MCF 10A (cell line): ENCODE measurements at regions of chr17 and their contacts with region 1.

Region 1: DNA sequence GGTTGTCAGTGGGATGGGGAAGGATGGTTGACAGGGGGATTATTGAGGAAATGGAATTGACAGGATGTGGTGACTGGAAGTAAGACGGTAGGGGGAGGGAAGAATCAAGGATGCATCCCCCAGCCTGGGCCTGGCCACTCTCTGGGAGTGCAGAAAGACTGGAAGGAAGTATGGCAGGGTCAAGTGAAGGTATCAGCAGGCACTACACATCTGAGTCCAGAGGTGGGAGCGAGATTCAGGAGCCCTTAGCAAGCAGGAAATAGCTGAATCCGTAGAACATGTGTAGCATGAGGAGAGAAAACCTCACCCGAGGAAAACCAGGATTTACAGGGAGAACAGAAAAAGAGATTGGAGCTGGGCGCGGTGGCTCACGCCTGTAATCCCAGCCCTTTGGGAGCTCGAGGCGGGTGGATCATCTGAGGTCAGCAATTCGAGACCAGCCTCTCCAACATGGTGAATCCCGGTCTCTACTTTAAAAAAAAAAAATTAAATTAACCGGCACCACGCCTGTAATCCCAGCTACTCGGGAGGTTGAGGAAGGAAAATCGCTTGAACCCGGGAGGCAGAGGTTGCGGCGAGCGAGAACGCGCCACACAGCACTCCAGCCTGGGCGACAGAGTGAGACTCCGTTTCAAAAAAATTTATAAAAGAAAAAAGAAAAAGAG is 5.8 kb downstream of the BORCS6 start:
- DNase-seq: no peak
- H3K4me3 Mint-ChIP-seq: peak overlapping the region; percentile 45
- H3K27ac Mint-ChIP-seq: no peak overlapping the region
- H3K4me1 Mint-ChIP-seq: no peaks in the 10 kb centered on the region
- H3K27me3 Mint-ChIP-seq: no peaks in the 10 kb centered on the region
- CTCF ChIP-seq: no peak

Region 2: GRCh38 chr17:8173056-8173870 is 10.9 kb before region 1 on chr17:
- CTCF ChIA-PET with region 1: interaction called, 5 read pairs
- POLR2A ChIA-PET with region 1: interaction called, 119 read pairs
- intact Hi-C with region 1: loop called (anchors 1 kb)
- DNase-seq: peak; percentile 99
- H3K4me3 Mint-ChIP-seq: peak overlapping the region; percentile 91
- H3K27ac Mint-ChIP-seq: peak overlapping the region; percentile 100
- H3K4me1 Mint-ChIP-seq: peaks cover 27% of the 10 kb centered on the region
- H3K27me3 Mint-ChIP-seq: no peaks in the 10 kb centered on the region
- CTCF ChIP-seq: no peak